RWPE1 (cell line): ENCODE measurements at regions of chr17 and their contacts with region 1.

Region 1: GRCh38 chr17:74659898-74660297 is 36.4 kb upstream of the CD300E start:
- DNase-seq: no peak
- H3K27ac ChIP-seq: no peak overlapping the region
- CTCF ChIP-seq: no peak

Region 2: GRCh38 chr17:74736513-74737298 is 76.8 kb after region 1 on chr17 and contains the start of gene RAB37:
- CTCF ChIA-PET with region 1: interaction called, 15 read pairs
- POLR2A ChIA-PET with region 1: no interaction called
- DNase-seq: no peak
- H3K27ac ChIP-seq: no peak within 1 kb of the TSS
- CTCF ChIP-seq: no peak; the same call in 1 of the 2 replicates